Aorta (tissue), 5 donors: ENCODE measurements at regions of chr4 and their contacts with region 1.

Region 1: DNA sequence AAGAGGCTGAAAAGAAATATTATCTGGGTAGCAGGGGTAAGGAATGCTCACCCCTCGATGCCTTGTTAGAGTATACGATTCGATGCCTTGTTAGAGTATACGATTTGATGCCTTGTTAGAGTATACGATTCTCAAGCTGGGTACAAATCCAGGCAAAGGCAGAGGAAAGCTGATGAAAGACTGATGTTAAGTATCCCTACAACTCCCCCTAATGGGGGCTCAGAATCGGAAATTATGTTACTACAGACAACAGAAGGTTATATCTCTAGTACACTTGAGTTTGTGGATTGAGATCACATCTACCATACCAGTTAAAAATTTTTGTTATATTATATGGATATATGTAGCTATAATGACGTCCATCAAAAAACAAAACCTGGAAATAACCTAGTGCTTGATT is 4.8 kb downstream of the LRRC66 start:
- DNase-seq: no peak
- ATAC-seq: no peak
- H3K4me3 ChIP-seq: no peak overlapping the region
- H3K27ac ChIP-seq: no peak overlapping the region
- H3K4me1 ChIP-seq: no peaks in the 10 kb centered on the region
- H3K27me3 ChIP-seq: no peaks in the 10 kb centered on the region

Region 2: GRCh38 chr4:51895813-51896408 is 119.5 kb before region 1 on chr4:
- intact Hi-C with region 1: loop called (anchors 5 kb)
- DNase-seq: peak in 1 of 2 donors; percentile 67
- ATAC-seq: peak; percentile 91
- H3K4me3 ChIP-seq: no peak overlapping the region
- H3K27ac ChIP-seq: no peak overlapping the region
- H3K4me1 ChIP-seq: peaks cover 3 to 4% of the 10 kb centered on the region in 2 donors
- H3K27me3 ChIP-seq: no peaks in the 10 kb centered on the region